CD8-positive, alpha-beta T cell (primary cell): ENCODE measurements at regions of chr19 and their contacts with region 1.

Region 1: GRCh38 chr19:1406774-1407499 is 449 bp upstream of the DAZAP1 start:
- DNase-seq: peak; percentile 99 to 100 (median 99)
- ATAC-seq: peak; percentile 80
- H3K4me3 ChIP-seq: peak overlapping the region; percentile 52 to 59
- H3K4me3 Mint-ChIP-seq: peak overlapping the region; percentile 79
- H3K27ac ChIP-seq: peak overlapping the region; percentile 56 to 80
- H3K27ac Mint-ChIP-seq: peak overlapping the region; percentile 89
- H3K4me1 ChIP-seq: peaks cover 48% of the 10 kb centered on the region
- H3K4me1 Mint-ChIP-seq: peaks cover 41% of the 10 kb centered on the region
- H3K27me3 ChIP-seq: no peaks in the 10 kb centered on the region
- H3K27me3 Mint-ChIP-seq: no peaks in the 10 kb centered on the region
- CTCF ChIP-seq: peak; percentile 70

Region 2: GRCh38 chr19:1173845-1174809 is 232.8 kb before region 1 on chr19 and contains the start of gene SBNO2:
- CTCF ChIA-PET with region 1: no interaction called
- POLR2A ChIA-PET with region 1: no interaction called
- intact Hi-C with region 1: no loop called
- DNase-seq: peak; percentile 82 to 95 (median 89)
- ATAC-seq: peak; percentile 92
- H3K4me3 ChIP-seq: peak within 1 kb of the TSS; percentile 64 to 77
- H3K4me3 Mint-ChIP-seq: peak within 1 kb of the TSS; percentile 89
- H3K27ac ChIP-seq: peak within 1 kb of the TSS; percentile 70 to 73
- H3K27ac Mint-ChIP-seq: peak within 1 kb of the TSS; percentile 94
- H3K4me1 ChIP-seq: peaks cover 23% of the 10 kb centered on the region
- H3K4me1 Mint-ChIP-seq: peaks cover 26% of the 10 kb centered on the region
- H3K27me3 ChIP-seq: no peaks in the 10 kb centered on the region
- H3K27me3 Mint-ChIP-seq: no peaks in the 10 kb centered on the region
- CTCF ChIP-seq: no peak
- total RNA-seq, gene SBNO2: 123 to 134 TPM

Region 3: DNA sequence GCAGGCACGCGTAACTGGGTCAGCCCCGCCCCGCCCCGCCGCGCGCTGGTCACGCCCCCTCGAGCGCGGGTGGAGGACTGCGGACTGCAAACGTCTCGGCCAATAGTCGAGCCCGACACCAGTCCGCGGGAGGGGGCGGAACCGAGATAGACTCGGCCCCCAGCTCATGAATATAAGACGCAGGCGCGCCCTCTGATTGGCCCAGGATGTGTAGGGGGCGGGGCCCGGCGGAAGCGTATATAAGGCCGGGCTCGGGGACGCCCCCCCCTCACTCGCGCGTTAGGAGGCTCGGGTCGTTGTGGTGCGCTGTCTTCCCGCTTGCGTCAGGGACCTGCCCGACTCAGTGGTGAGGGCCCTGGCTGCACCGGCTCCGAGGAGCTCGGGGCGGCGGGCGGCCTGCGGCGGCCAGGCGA is 137.9 kb before region 1 on chr19 and contains the start of gene CIRBP:
- CTCF ChIA-PET with region 1: no interaction called
- POLR2A ChIA-PET with region 1: interaction called, 10 read pairs
- intact Hi-C with region 1: no loop called
- DNase-seq: peak; percentile 99 to 100 (median 99)
- ATAC-seq: peak; percentile 80
- H3K4me3 ChIP-seq: peak within 1 kb of the TSS; percentile 65 to 84
- H3K4me3 Mint-ChIP-seq: peak within 1 kb of the TSS; percentile 85
- H3K27ac ChIP-seq: peak within 1 kb of the TSS; percentile 88 to 89
- H3K27ac Mint-ChIP-seq: peak within 1 kb of the TSS; percentile 95
- H3K4me1 ChIP-seq: peaks cover 73% of the 10 kb centered on the region
- H3K4me1 Mint-ChIP-seq: peaks cover 68% of the 10 kb centered on the region
- H3K27me3 ChIP-seq: no peaks in the 10 kb centered on the region
- H3K27me3 Mint-ChIP-seq: no peaks in the 10 kb centered on the region
- CTCF ChIP-seq: no peak
- total RNA-seq, gene CIRBP: 689 to 695 TPM

Region 4: GRCh38 chr19:1383311-1384084 is 23.4 kb before region 1 on chr19 and contains the start of gene NDUFS7:
- CTCF ChIA-PET with region 1: interaction called, 3 read pairs
- POLR2A ChIA-PET with region 1: interaction called, 3 read pairs
- intact Hi-C with region 1: loop called (anchors 1 kb)
- DNase-seq: peak; percentile 91 to 100 (median 95)
- ATAC-seq: peak; percentile 90
- H3K4me3 ChIP-seq: peak within 1 kb of the TSS; percentile 93 to 94
- H3K4me3 Mint-ChIP-seq: peak within 1 kb of the TSS; percentile 94
- H3K27ac ChIP-seq: peak within 1 kb of the TSS; percentile 72 to 91
- H3K27ac Mint-ChIP-seq: peak within 1 kb of the TSS; percentile 99
- H3K4me1 ChIP-seq: peaks cover 10% of the 10 kb centered on the region
- H3K4me1 Mint-ChIP-seq: peaks cover 16% of the 10 kb centered on the region
- H3K27me3 ChIP-seq: no peaks in the 10 kb centered on the region
- H3K27me3 Mint-ChIP-seq: peaks cover 2% of the 10 kb centered on the region
- CTCF ChIP-seq: no peak
- total RNA-seq, gene NDUFS7: 38.6 to 41.1 TPM

Region 5: GRCh38 chr19:1478934-1479707 is 72.2 kb after region 1 on chr19 and contains the start of gene C19orf25:
- CTCF ChIA-PET with region 1: no interaction called
- POLR2A ChIA-PET with region 1: no interaction called
- intact Hi-C with region 1: loop called in 1 of 2 experiments (anchors 2 kb)
- DNase-seq: peak; percentile 81 to 94 (median 89)
- ATAC-seq: peak; percentile 91
- H3K4me3 ChIP-seq: peak within 1 kb of the TSS; percentile 68 to 86
- H3K4me3 Mint-ChIP-seq: peak within 1 kb of the TSS; percentile 99
- H3K27ac ChIP-seq: peak within 1 kb of the TSS; percentile 65 to 76
- H3K27ac Mint-ChIP-seq: peak within 1 kb of the TSS; percentile 98
- H3K4me1 ChIP-seq: peaks cover 12% of the 10 kb centered on the region
- H3K4me1 Mint-ChIP-seq: peaks cover 19% of the 10 kb centered on the region
- H3K27me3 ChIP-seq: no peaks in the 10 kb centered on the region
- H3K27me3 Mint-ChIP-seq: no peaks in the 10 kb centered on the region
- CTCF ChIP-seq: no peak
- total RNA-seq, gene C19orf25: 11.9 to 12.1 TPM

Region 6: DNA sequence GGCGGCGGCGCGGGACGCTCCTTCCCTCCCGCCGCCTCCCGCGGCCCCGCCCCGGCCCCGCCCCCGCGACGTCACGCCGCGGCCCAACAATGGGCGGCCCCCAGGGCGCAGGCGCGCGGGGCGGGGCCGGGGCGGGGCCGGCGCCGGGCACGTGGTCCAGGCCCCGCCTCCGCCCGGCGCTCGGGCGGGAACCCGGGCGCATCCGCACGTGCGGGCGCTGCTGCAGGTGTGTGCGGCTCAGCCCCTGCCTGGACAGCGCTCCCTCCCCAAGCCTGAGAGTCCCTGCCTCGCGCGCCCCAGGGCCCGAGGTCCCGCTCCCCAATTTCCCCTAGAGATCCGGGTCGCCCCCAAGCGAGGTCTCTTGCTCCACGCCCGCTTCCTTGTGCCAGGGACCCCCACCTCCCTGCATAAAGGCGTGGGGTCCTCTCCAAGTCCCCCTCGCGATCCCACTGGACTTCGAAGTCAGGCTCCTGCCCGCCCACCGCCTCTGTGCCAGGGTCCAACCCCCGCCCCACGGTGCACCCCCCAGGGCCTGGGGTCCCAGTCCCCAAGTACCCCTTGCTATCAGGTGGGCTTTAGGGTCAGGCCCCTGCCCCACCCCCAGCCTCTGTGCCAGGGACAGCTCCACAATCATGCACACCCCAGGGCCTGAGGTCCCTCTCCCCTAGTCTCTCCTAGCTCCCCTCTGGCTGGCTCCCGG is 161.5 kb after region 1 on chr19 and contains the start of gene MEX3D:
- CTCF ChIA-PET with region 1: no interaction called
- POLR2A ChIA-PET with region 1: no interaction called
- intact Hi-C with region 1: loop called in 1 of 2 experiments (anchors 5 kb)
- DNase-seq: peak; percentile 54 to 91 (median 83)
- ATAC-seq: peak; percentile 95
- H3K4me3 ChIP-seq: peak within 1 kb of the TSS; percentile 16 to 39
- H3K4me3 Mint-ChIP-seq: peak within 1 kb of the TSS; percentile 57
- H3K27ac ChIP-seq: no peak within 1 kb of the TSS
- H3K27ac Mint-ChIP-seq: no peak within 1 kb of the TSS
- H3K4me1 ChIP-seq: peaks cover 8% of the 10 kb centered on the region
- H3K4me1 Mint-ChIP-seq: peaks cover 4% of the 10 kb centered on the region
- H3K27me3 ChIP-seq: peaks cover 0 to 2% of the 10 kb centered on the region in 2 experiments
- H3K27me3 Mint-ChIP-seq: no peaks in the 10 kb centered on the region
- CTCF ChIP-seq: no peak
- total RNA-seq, gene MEX3D: 1.5 to 1.7 TPM